ENCODE measurements at regions of chr1 and their contacts with region 1.

Region 1: GRCh38 chr1:40849801-40850592 is 12.2 kb downstream of the CITED4 start:
- DNase-seq: peak in 1 of 2 experiments; percentile 78
- H3K4me3 ChIP-seq: no peak overlapping the region
- H3K27ac ChIP-seq: no peak overlapping the region
- H3K4me1 ChIP-seq: no peaks in the 10 kb centered on the region
- H3K27me3 ChIP-seq: no peaks in the 10 kb centered on the region
- CTCF ChIP-seq: peak; percentile 93

Region 2: GRCh38 chr1:40592107-40592803 is 257.7 kb before region 1 on chr1:
- CTCF ChIA-PET with region 1: no interaction called
- POLR2A ChIA-PET with region 1: no interaction called
- intact Hi-C with region 1: loop called (anchors 1 kb)
- DNase-seq: peak; percentile 58 to 60
- H3K4me3 ChIP-seq: no peak overlapping the region
- H3K27ac ChIP-seq: no peak overlapping the region
- H3K4me1 ChIP-seq: no peaks in the 10 kb centered on the region
- H3K27me3 ChIP-seq: no peaks in the 10 kb centered on the region
- CTCF ChIP-seq: peak; percentile 63

Region 3: GRCh38 chr1:40736085-40736531 is 113.9 kb before region 1 on chr1:
- CTCF ChIA-PET with region 1: no interaction called
- POLR2A ChIA-PET with region 1: no interaction called
- intact Hi-C with region 1: no loop called
- DNase-seq: no peak
- H3K4me3 ChIP-seq: no peak overlapping the region
- H3K27ac ChIP-seq: no peak overlapping the region
- H3K4me1 ChIP-seq: no peaks in the 10 kb centered on the region
- H3K27me3 ChIP-seq: no peaks in the 10 kb centered on the region
- CTCF ChIP-seq: no peak

Region 4: DNA sequence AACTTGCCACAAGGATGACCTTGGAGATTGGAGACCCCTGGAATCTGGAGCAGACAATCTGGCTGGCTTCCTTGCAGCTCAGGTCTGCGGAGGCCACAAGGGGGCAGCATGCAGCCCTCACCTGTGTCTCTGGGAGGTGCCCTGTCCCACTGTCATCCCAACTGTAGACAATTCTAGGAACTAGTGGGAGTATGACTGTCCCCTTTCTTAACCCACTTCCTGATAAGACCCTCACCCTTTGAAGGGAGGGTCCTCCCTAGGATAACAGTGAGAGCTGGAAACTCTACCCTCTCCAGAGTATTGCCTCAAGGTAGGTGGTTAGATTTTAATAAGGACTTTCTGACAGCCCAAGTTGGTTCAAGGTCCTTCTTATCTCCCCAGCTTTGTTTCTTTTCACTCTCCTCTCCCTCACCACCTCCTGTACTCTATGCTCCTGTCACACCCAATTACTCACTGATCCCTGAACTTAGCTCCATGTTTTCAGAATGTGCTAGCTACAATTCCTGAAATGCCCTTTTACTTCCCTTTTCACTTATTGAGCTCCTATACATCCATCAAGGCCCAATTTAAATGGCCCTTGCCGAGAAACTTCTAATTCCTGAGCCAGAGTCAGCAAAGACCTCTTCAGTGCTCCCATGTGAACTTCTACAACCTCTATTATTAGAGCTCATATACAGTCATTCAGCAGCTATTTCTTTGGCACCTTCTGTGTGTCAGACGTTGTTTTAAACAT is 75.6 kb before region 1 on chr1:
- CTCF ChIA-PET with region 1: interaction called, 16 read pairs
- POLR2A ChIA-PET with region 1: no interaction called
- intact Hi-C with region 1: loop called (anchors 1 kb)
- DNase-seq: peak; percentile 38 to 68
- H3K4me3 ChIP-seq: no peak overlapping the region
- H3K27ac ChIP-seq: no peak overlapping the region
- H3K4me1 ChIP-seq: no peaks in the 10 kb centered on the region
- H3K27me3 ChIP-seq: no peaks in the 10 kb centered on the region
- CTCF ChIP-seq: peak; percentile 87

Region 5: GRCh38 chr1:41122851-41123507 is 273.0 kb after region 1 on chr1:
- CTCF ChIA-PET with region 1: no interaction called
- POLR2A ChIA-PET with region 1: no interaction called
- intact Hi-C with region 1: loop called (anchors 5 kb)
- DNase-seq: peak in 1 of 2 experiments; percentile 76
- H3K4me3 ChIP-seq: no peak overlapping the region
- H3K27ac ChIP-seq: no peak overlapping the region
- H3K4me1 ChIP-seq: peaks cover 6% of the 10 kb centered on the region; the same call in 1 of the 2 replicates
- H3K27me3 ChIP-seq: no peaks in the 10 kb centered on the region
- CTCF ChIP-seq: peak; percentile 73

Region 6: GRCh38 chr1:42173155-42173933 is 1323.3 kb after region 1 on chr1:
- CTCF ChIA-PET with region 1: interaction called, 15 read pairs
- POLR2A ChIA-PET with region 1: no interaction called
- intact Hi-C with region 1: no loop called
- DNase-seq: peak in 1 of 2 experiments; percentile 65
- H3K4me3 ChIP-seq: no peak overlapping the region
- H3K27ac ChIP-seq: 0 out of 2 replicates have a peak overlapping the region, but pooled peaks have one; percentile 1
- H3K4me1 ChIP-seq: peaks cover 47% of the 10 kb centered on the region
- H3K27me3 ChIP-seq: no peaks in the 10 kb centered on the region
- CTCF ChIP-seq: peak; percentile 98

Measured in PC-9 (cell line).